IMR-90 (cell line): ENCODE measurements at regions of chr13 and their contacts with region 1.

Region 1: DNA sequence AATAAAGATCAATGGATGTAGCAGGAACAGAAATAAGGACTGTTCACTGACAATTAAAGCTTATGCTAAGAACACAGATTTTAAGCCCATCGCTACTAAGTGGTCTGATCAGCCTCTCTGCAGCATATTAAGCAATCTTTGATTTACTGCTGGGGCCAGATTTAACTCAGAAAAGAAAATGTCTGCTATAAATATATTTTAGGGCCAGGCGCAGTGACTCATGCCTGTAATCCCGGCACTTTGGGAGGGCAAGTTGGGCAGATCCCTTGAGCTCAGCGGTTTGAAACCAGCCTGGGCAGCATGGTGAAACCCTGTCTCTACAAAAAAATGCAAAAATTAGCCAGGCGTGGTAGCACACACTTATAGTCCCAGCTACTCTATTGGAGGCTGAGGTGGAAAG is 43.0 kb downstream of the METTL21C start:
- DNase-seq: peak; percentile 52
- ATAC-seq: peak; percentile 68
- H3K4me3 ChIP-seq: no peak overlapping the region
- H3K27ac ChIP-seq: peak overlapping the region; percentile 2; the same call in 1 of the 2 replicates
- H3K4me1 ChIP-seq: peaks cover 5% of the 10 kb centered on the region
- H3K27me3 ChIP-seq: no peaks in the 10 kb centered on the region
- CTCF ChIP-seq: no peak
- POLR2A ChIP-seq: no peak
- RAD21 ChIP-seq: no peak

Region 2: GRCh38 chr13:102620516-102620915 is 31.4 kb before region 1 on chr13:
- CTCF ChIA-PET with region 1: no interaction called
- POLR2A ChIA-PET with region 1: no interaction called
- dilution Hi-C with region 1: no loop called
- in situ Hi-C with region 1: no loop called
- intact Hi-C with region 1: loop called (anchors 5 kb)
- DNase-seq: no peak
- ATAC-seq: no peak
- H3K4me3 ChIP-seq: no peak overlapping the region
- H3K27ac ChIP-seq: no peak overlapping the region
- H3K4me1 ChIP-seq: peaks cover 2% of the 10 kb centered on the region; the same call in 1 of the 2 replicates
- H3K27me3 ChIP-seq: no peaks in the 10 kb centered on the region
- CTCF ChIP-seq: no peak
- POLR2A ChIP-seq: no peak
- RAD21 ChIP-seq: no peak

Region 3: GRCh38 chr13:102724923-102725322 is 73.0 kb after region 1 on chr13:
- CTCF ChIA-PET with region 1: no interaction called
- POLR2A ChIA-PET with region 1: no interaction called
- dilution Hi-C with region 1: no loop called
- in situ Hi-C with region 1: no loop called
- intact Hi-C with region 1: loop called (anchors 5 kb)
- DNase-seq: peak; percentile 24
- ATAC-seq: peak; percentile 80
- H3K4me3 ChIP-seq: no peak overlapping the region
- H3K27ac ChIP-seq: no peak overlapping the region
- H3K4me1 ChIP-seq: no peaks in the 10 kb centered on the region
- H3K27me3 ChIP-seq: no peaks in the 10 kb centered on the region; the same call in 1 of the 2 replicates
- CTCF ChIP-seq: peak; percentile 40
- POLR2A ChIP-seq: no peak
- RAD21 ChIP-seq: peak; percentile 48

Region 4: GRCh38 chr13:102773441-102774215 is 121.7 kb after region 1 on chr13 and contains the start of gene TEX30:
- CTCF ChIA-PET with region 1: interaction called, 3 read pairs
- POLR2A ChIA-PET with region 1: interaction called, 5 read pairs
- dilution Hi-C with region 1: no loop called
- in situ Hi-C with region 1: no loop called
- intact Hi-C with region 1: loop called (anchors 5 kb)
- DNase-seq: peak; percentile 76
- ATAC-seq: peak; percentile 97
- H3K4me3 ChIP-seq: peak within 1 kb of the TSS; percentile 76
- H3K27ac ChIP-seq: peak within 1 kb of the TSS; percentile 85
- H3K4me1 ChIP-seq: peaks cover 2% of the 10 kb centered on the region; the same call in 1 of the 2 replicates
- H3K27me3 ChIP-seq: no peaks in the 10 kb centered on the region
- CTCF ChIP-seq: no peak
- POLR2A ChIP-seq: peak; percentile 92
- RAD21 ChIP-seq: 0 out of 2 replicates have a peak, but pooled peaks have one; percentile 2
- total RNA-seq, gene TEX30: 8.1 and 15.3 TPM in 2 replicates

Region 5: GRCh38 chr13:102800145-102801041 is 148.5 kb after region 1 on chr13:
- CTCF ChIA-PET with region 1: no interaction called
- POLR2A ChIA-PET with region 1: no interaction called
- dilution Hi-C with region 1: no loop called
- in situ Hi-C with region 1: no loop called
- intact Hi-C with region 1: no loop called
- DNase-seq: peak; percentile 68
- ATAC-seq: peak; percentile 78
- H3K4me3 ChIP-seq: peak overlapping the region; percentile 84
- H3K27ac ChIP-seq: peak overlapping the region; percentile 68
- H3K4me1 ChIP-seq: 0 out of 2 replicates have a peak, but pooled peaks cover 3% of the 10 kb centered on the region
- H3K27me3 ChIP-seq: no peaks in the 10 kb centered on the region
- CTCF ChIP-seq: peak; percentile 66
- POLR2A ChIP-seq: peak; percentile 40; the same call in 1 of the 2 replicates
- RAD21 ChIP-seq: peak; percentile 25; the same call in 1 of the 2 replicates